Esophagus muscularis mucosa (tissue), 4 donors: ENCODE measurements at regions of chr17 and their contacts with region 1.

Region 1: GRCh38 chr17:9371019-9371418 is 204.6 kb downstream of the STX8 start:
- DNase-seq: no peak
- H3K4me3 ChIP-seq: no peak overlapping the region
- H3K27ac ChIP-seq: no peak overlapping the region
- H3K4me1 ChIP-seq: peaks cover 13 to 20% (median 15%) of the 10 kb centered on the region in 4 donors
- H3K27me3 ChIP-seq: no peaks in the 10 kb centered on the region
- CTCF ChIP-seq: no peak
- EP300 ChIP-seq: no peak
- POLR2A ChIP-seq: no peak

Region 2: DNA sequence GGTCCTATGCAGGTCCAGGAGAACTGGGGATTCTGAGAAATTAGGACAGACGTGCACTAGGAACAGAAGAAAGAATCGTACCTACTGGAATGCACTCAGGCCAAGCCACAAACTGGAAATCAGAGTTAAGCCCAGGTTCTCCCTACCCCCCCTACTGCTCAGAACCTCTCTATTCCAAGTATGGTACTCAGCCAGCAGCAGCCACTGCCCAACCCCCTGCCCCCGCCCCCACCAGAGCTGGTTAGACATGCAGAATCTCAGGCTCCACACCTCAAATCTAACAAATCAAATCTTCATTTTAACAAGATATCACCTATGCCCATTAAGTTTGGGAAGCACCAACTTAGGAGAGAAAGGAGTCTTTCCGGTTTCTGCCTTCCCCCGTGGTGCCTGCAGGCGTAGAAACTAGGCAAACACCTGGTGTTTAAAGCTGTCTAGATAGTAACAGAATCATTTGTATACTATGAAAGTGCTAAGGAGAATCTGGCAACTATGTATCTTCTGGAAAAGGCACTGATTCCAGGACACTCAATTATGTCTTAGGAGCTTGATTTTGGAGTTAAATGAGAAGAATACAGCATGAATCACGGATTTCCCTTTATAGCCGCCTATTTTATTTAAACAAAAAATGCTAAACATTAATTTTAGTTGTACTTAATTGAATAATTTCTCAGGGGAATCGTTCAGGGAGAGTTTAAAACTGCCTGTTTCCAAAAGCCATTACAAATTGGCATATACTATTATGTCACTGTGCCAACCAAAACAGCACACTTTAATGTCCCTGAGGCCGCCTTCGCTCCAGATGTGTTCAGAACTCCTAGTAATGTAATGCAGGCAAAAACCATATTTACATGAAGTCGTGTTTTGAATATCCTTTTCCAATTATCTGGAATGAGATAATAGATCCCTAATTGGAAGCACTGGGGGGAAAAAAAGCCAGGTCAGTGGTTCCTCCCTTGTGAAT is 38.1 kb after region 1 on chr17:
- intact Hi-C with region 1: no loop called
- DNase-seq: no peak
- H3K4me3 ChIP-seq: peak overlapping the region in 3 of 4 donors; percentile 0 to 12 (median 6)
- H3K27ac ChIP-seq: peak overlapping the region; percentile 1 to 65 (median 30)
- H3K4me1 ChIP-seq: peaks cover 0 to 22% (median 19%) of the 10 kb centered on the region in 4 donors
- H3K27me3 ChIP-seq: no peaks in the 10 kb centered on the region
- CTCF ChIP-seq: no peak
- EP300 ChIP-seq: no peak
- POLR2A ChIP-seq: no peak

Region 3: GRCh38 chr17:9424071-9424640 is 53.1 kb after region 1 on chr17:
- intact Hi-C with region 1: loop called (anchors 2 kb)
- DNase-seq: no peak
- H3K4me3 ChIP-seq: no peak overlapping the region
- H3K27ac ChIP-seq: no peak overlapping the region
- H3K4me1 ChIP-seq: peaks cover 8 to 20% (median 16%) of the 10 kb centered on the region in 4 donors
- H3K27me3 ChIP-seq: no peaks in the 10 kb centered on the region
- CTCF ChIP-seq: no peak
- EP300 ChIP-seq: no peak
- POLR2A ChIP-seq: no peak